ENCODE measurements at regions of chr9 and their contacts with region 1.

Region 1: GRCh38 chr9:89597711-89598625 is 6.8 kb upstream of the GADD45G start:
- DNase-seq: peak in 6 of 9 experiments; percentile 26 to 71 (median 55)
- ATAC-seq: peak; percentile 54
- H3K4me3 ChIP-seq: no peak overlapping the region
- H3K4me3 Mint-ChIP-seq: no peak overlapping the region
- H3K27ac ChIP-seq: no peak overlapping the region
- H3K27ac Mint-ChIP-seq: no peak overlapping the region
- H3K4me1 ChIP-seq: no peaks in the 10 kb centered on the region
- H3K4me1 Mint-ChIP-seq: peaks cover 5% of the 10 kb centered on the region
- H3K27me3 ChIP-seq: no peaks in the 10 kb centered on the region
- H3K27me3 Mint-ChIP-seq: peaks cover 8% of the 10 kb centered on the region
- CTCF ChIP-seq: peak; percentile 61

Region 2: GRCh38 chr9:89576404-89576839 is 21.5 kb before region 1 on chr9:
- CTCF ChIA-PET with region 1: interaction called, 21 read pairs
- POLR2A ChIA-PET with region 1: no interaction called
- intact Hi-C with region 1: loop called in 1 of 2 experiments (anchors 2 kb)
- DNase-seq: peak in 3 of 9 experiments; percentile 28 to 66 (median 59)
- ATAC-seq: no peak
- H3K4me3 ChIP-seq: no peak overlapping the region
- H3K4me3 Mint-ChIP-seq: no peak overlapping the region
- H3K27ac ChIP-seq: no peak overlapping the region
- H3K27ac Mint-ChIP-seq: no peak overlapping the region
- H3K4me1 ChIP-seq: peaks cover 19% of the 10 kb centered on the region
- H3K4me1 Mint-ChIP-seq: peaks cover 19% of the 10 kb centered on the region
- H3K27me3 ChIP-seq: no peaks in the 10 kb centered on the region
- H3K27me3 Mint-ChIP-seq: peaks cover 15% of the 10 kb centered on the region
- CTCF ChIP-seq: peak; percentile 94

Region 3: GRCh38 chr9:89608651-89609345 is 10.8 kb after region 1 on chr9:
- CTCF ChIA-PET with region 1: interaction called, 48 read pairs
- POLR2A ChIA-PET with region 1: no interaction called
- intact Hi-C with region 1: no loop called
- DNase-seq: no peak
- ATAC-seq: no peak
- H3K4me3 ChIP-seq: no peak overlapping the region
- H3K4me3 Mint-ChIP-seq: no peak overlapping the region
- H3K27ac ChIP-seq: no peak overlapping the region
- H3K27ac Mint-ChIP-seq: no peak overlapping the region
- H3K4me1 ChIP-seq: peaks cover 30% of the 10 kb centered on the region
- H3K4me1 Mint-ChIP-seq: peaks cover 16% of the 10 kb centered on the region
- H3K27me3 ChIP-seq: peaks cover 0 to 4% of the 10 kb centered on the region in 2 experiments
- H3K27me3 Mint-ChIP-seq: peaks cover 3% of the 10 kb centered on the region
- CTCF ChIP-seq: no peak

Region 4: DNA sequence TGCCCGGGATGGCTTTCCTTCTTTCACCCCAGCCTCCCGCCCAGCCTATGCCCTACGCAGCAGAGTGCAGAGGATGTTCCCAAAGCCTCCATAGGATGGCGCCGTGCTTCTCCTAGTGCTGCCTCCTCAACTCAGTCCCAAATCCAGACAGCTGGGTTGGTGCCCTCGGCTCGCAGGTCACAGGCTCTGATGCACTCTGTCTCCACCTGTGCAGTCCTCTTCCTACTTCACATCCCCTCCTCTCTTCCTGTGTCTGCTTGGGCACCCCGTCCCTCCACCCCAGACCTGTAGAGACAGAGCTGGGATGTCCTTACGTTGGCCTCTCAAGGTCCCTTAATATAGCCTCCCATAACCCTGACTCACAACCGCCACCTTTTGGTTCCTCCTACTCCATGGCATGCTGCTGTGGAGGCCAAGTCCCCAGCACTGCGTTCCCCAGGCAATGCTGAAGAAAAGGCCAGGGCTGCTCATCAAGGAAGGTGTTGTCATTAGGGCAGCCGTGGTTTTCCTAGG is 321.3 kb after region 1 on chr9:
- CTCF ChIA-PET with region 1: interaction called, 31 read pairs
- POLR2A ChIA-PET with region 1: no interaction called
- intact Hi-C with region 1: loop called (anchors 1 to 2 kb)
- DNase-seq: peak in 4 of 9 experiments; percentile 12 to 53 (median 32)
- ATAC-seq: peak; percentile 51
- H3K4me3 ChIP-seq: no peak overlapping the region
- H3K4me3 Mint-ChIP-seq: no peak overlapping the region
- H3K27ac ChIP-seq: no peak overlapping the region
- H3K27ac Mint-ChIP-seq: no peak overlapping the region
- H3K4me1 ChIP-seq: no peaks in the 10 kb centered on the region
- H3K4me1 Mint-ChIP-seq: peaks cover 3% of the 10 kb centered on the region
- H3K27me3 ChIP-seq: peaks cover 0 to 3% of the 10 kb centered on the region in 2 experiments
- H3K27me3 Mint-ChIP-seq: peaks cover 11% of the 10 kb centered on the region
- CTCF ChIP-seq: no peak

Region 5: DNA sequence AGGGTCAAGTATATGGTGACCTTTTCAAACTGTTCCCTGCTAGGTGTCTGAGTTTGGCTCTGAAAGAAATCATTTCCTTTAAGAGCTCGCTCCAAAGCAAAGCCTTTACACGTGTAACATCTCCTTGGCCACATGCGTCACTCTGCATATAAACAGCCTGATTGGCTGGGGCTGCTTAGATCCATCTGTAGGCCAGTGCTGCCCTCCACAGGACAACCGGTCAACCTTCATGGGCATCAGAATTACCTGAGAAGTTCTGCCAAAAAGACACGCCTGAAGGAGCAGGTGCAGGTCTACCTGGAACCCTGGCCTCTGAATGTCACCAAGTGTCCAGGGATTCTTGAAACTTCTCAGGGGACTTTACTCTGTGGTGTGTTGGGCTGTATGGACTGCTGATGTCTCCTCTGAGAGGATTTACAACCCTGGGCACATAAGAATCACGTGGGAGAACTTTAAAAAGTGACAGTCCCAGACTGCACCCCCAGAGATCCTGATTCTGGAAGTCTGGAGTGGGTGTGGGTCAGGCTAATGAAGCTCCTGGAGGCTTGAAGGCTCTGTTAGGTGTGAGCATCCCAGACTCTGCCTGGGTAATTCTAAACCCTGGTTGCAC is 504.4 kb after region 1 on chr9:
- CTCF ChIA-PET with region 1: interaction called, 66 read pairs
- POLR2A ChIA-PET with region 1: interaction called, 9 read pairs
- intact Hi-C with region 1: loop called (anchors 1 kb)
- DNase-seq: peak; percentile 50 to 88 (median 71)
- ATAC-seq: peak; percentile 100
- H3K4me3 ChIP-seq: no peak overlapping the region
- H3K4me3 Mint-ChIP-seq: no peak overlapping the region
- H3K27ac ChIP-seq: no peak overlapping the region
- H3K27ac Mint-ChIP-seq: no peak overlapping the region
- H3K4me1 ChIP-seq: peaks cover 4% of the 10 kb centered on the region
- H3K4me1 Mint-ChIP-seq: peaks cover 5% of the 10 kb centered on the region
- H3K27me3 ChIP-seq: no peaks in the 10 kb centered on the region
- H3K27me3 Mint-ChIP-seq: peaks cover 13% of the 10 kb centered on the region
- CTCF ChIP-seq: peak; percentile 58

Region 6: GRCh38 chr9:90870621-90871326 is 1272.8 kb after region 1 on chr9:
- CTCF ChIA-PET with region 1: interaction called, 6 read pairs
- POLR2A ChIA-PET with region 1: no interaction called
- intact Hi-C with region 1: loop called (anchors 1 to 2 kb)
- DNase-seq: peak in 6 of 9 experiments; percentile 7 to 65 (median 50)
- ATAC-seq: no peak
- H3K4me3 ChIP-seq: no peak overlapping the region
- H3K4me3 Mint-ChIP-seq: no peak overlapping the region
- H3K27ac ChIP-seq: no peak overlapping the region
- H3K27ac Mint-ChIP-seq: no peak overlapping the region
- H3K4me1 ChIP-seq: no peaks in the 10 kb centered on the region
- H3K4me1 Mint-ChIP-seq: no peaks in the 10 kb centered on the region
- H3K27me3 ChIP-seq: no peaks in the 10 kb centered on the region
- H3K27me3 Mint-ChIP-seq: no peaks in the 10 kb centered on the region
- CTCF ChIP-seq: peak; percentile 95

Measured in CD8-positive, alpha-beta T cell (primary cell).